ENCODE measurements at regions of chr15 and their contacts with region 1.

Region 1: DNA sequence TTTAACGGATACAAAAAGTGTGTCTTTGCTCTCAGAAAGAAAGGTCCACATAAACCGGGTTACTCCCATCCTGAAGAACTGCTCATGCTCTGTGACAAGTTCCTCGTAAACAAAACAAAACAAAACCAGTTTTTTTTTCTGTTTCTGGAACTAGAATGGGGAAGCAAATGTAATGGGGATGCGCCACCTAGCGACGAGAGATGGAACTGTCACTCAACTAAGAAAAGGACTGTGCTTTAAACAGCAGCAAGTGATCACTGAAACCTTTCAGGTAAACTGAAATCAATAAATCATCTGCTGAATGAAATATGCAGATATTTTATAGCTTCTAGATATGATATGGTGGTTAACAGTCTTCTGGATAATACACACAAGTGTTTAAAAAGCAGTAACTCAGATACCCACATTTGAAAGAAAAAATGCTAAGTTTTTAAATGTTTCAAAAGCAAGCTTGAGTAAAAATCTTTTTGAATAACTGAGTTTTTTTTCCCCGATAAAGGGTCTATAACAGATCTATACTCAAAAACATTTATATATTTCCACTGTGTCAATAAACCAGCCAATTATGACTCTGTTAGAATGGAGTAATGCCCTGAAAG is 10.9 kb downstream of the TM2D3 start:
- DNase-seq: peak; percentile 55
- ATAC-seq: peak; percentile 56
- H3K4me3 Mint-ChIP-seq: no peak overlapping the region
- H3K27ac Mint-ChIP-seq: peak overlapping the region; percentile 76
- H3K4me1 Mint-ChIP-seq: peaks cover 23% of the 10 kb centered on the region
- H3K27me3 Mint-ChIP-seq: no peaks in the 10 kb centered on the region
- CTCF ChIP-seq: peak; percentile 39

Region 2: DNA sequence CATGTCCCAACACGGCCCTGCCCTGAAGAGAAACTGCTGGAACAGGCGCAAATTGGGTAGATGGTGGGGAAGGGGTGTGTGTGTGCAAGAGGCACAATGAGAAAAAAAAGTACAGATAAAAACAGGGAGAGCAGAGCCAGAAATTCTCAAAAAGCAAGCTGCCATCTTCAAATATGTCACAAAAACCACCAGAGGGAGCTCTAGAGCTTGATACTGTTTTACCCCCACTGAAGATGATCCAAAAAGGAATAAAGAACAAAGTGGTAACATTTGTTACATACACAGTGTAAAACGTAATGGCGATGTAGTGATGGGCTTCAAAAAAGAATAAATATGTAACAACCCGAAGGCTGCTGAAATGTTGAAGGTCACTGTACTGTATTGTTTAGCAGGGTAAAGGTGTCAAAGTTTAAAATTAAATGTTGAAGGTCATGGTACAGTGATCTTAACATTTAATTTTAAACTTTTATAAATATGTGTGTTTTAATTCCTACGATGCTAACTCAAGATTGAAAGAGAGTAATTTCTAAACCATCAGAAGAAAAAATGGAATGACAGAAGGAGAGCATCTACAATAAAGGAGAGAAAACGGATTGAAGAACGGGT is 352.3 kb before region 1 on chr15:
- CTCF ChIA-PET with region 1: interaction called, 42 read pairs
- POLR2A ChIA-PET with region 1: interaction called, 25 read pairs
- intact Hi-C with region 1: loop called (anchors 1 kb)
- DNase-seq: no peak
- ATAC-seq: peak; percentile 40
- H3K4me3 Mint-ChIP-seq: no peak overlapping the region
- H3K27ac Mint-ChIP-seq: no peak overlapping the region
- H3K4me1 Mint-ChIP-seq: peaks cover 42% of the 10 kb centered on the region
- H3K27me3 Mint-ChIP-seq: no peaks in the 10 kb centered on the region
- CTCF ChIP-seq: no peak

Region 3: GRCh38 chr15:101303408-101303807 is 337.9 kb before region 1 on chr15:
- CTCF ChIA-PET with region 1: interaction called, 17 read pairs
- POLR2A ChIA-PET with region 1: interaction called, 3 read pairs
- intact Hi-C with region 1: loop called (anchors 1 kb)
- DNase-seq: no peak
- ATAC-seq: no peak
- H3K4me3 Mint-ChIP-seq: no peak overlapping the region
- H3K27ac Mint-ChIP-seq: no peak overlapping the region
- H3K4me1 Mint-ChIP-seq: no peaks in the 10 kb centered on the region
- H3K27me3 Mint-ChIP-seq: no peaks in the 10 kb centered on the region
- CTCF ChIP-seq: no peak

Region 4: GRCh38 chr15:101501703-101502373 is 139.4 kb before region 1 on chr15:
- CTCF ChIA-PET with region 1: interaction called, 3 read pairs
- POLR2A ChIA-PET with region 1: no interaction called
- intact Hi-C with region 1: loop called (anchors 2 kb)
- DNase-seq: peak; percentile 26
- ATAC-seq: peak; percentile 88
- H3K4me3 Mint-ChIP-seq: peak overlapping the region; percentile 61
- H3K27ac Mint-ChIP-seq: no peak overlapping the region
- H3K4me1 Mint-ChIP-seq: peaks cover 18% of the 10 kb centered on the region
- H3K27me3 Mint-ChIP-seq: peaks cover 34% of the 10 kb centered on the region
- CTCF ChIP-seq: no peak

Region 5: GRCh38 chr15:101652098-101652782 is 11.0 kb after region 1 on chr15 and contains the start of gene TM2D3:
- CTCF ChIA-PET with region 1: interaction called, 8 read pairs
- POLR2A ChIA-PET with region 1: interaction called, 3 read pairs
- intact Hi-C with region 1: loop called (anchors 1 kb)
- DNase-seq: peak; percentile 99
- ATAC-seq: peak; percentile 87
- H3K4me3 Mint-ChIP-seq: peak within 1 kb of the TSS; percentile 92
- H3K27ac Mint-ChIP-seq: peak within 1 kb of the TSS; percentile 95
- H3K4me1 Mint-ChIP-seq: peaks cover 46% of the 10 kb centered on the region
- H3K27me3 Mint-ChIP-seq: no peaks in the 10 kb centered on the region
- CTCF ChIP-seq: no peak
- total RNA-seq, gene TM2D3: 45.8 and 49.9 TPM in 2 replicates

Measured in activated B cell treated with CpG ODN at 0.5 μM for 24 hours (primary cell).